ENCODE measurements at regions of chr3 and their contacts with region 1.

Region 1: GRCh38 chr3:44624749-44625480 is at the start of gene ZNF197:
- DNase-seq: peak; percentile 82 to 91
- ATAC-seq: peak; percentile 97 to 99 (median 98)
- H3K4me3 ChIP-seq: peak within 1 kb of the TSS; percentile 67 to 98 (median 88)
- H3K27ac ChIP-seq: peak within 1 kb of the TSS; percentile 84 to 98 (median 93)
- H3K4me1 ChIP-seq: peaks cover 0 to 41% (median 27%) of the 10 kb centered on the region in 9 donors
- H3K27me3 ChIP-seq: no peaks in the 10 kb centered on the region
- CTCF ChIP-seq: peak in 4 of 9 donors; percentile 27 to 47 (median 42)
- total RNA-seq, gene ZNF197: 11.2 to 14.8 (median 12.9) TPM

Region 2: GRCh38 chr3:44554626-44555592 is 70.0 kb before region 1 on chr3 and contains the start of gene ZKSCAN7:
- intact Hi-C with region 1: loop called in 1 of 10 experiments (anchors 2 kb)
- DNase-seq: peak; percentile 50 to 70
- ATAC-seq: peak; percentile 78 to 88 (median 86)
- H3K4me3 ChIP-seq: peak within 1 kb of the TSS; percentile 54 to 85 (median 74)
- H3K27ac ChIP-seq: peak within 1 kb of the TSS in 9 of 10 donors; percentile 43 to 83 (median 76)
- H3K4me1 ChIP-seq: peaks cover 4 to 16% (median 11%) of the 10 kb centered on the region in 9 donors
- H3K27me3 ChIP-seq: peaks cover 0 to 18% (median 14%) of the 10 kb centered on the region in 7 donors
- CTCF ChIP-seq: peak in 5 of 9 donors; percentile 15 to 42 (median 32)
- total RNA-seq, gene ZKSCAN7: 1.6 to 3.9 (median 2.4) TPM

Region 3: DNA sequence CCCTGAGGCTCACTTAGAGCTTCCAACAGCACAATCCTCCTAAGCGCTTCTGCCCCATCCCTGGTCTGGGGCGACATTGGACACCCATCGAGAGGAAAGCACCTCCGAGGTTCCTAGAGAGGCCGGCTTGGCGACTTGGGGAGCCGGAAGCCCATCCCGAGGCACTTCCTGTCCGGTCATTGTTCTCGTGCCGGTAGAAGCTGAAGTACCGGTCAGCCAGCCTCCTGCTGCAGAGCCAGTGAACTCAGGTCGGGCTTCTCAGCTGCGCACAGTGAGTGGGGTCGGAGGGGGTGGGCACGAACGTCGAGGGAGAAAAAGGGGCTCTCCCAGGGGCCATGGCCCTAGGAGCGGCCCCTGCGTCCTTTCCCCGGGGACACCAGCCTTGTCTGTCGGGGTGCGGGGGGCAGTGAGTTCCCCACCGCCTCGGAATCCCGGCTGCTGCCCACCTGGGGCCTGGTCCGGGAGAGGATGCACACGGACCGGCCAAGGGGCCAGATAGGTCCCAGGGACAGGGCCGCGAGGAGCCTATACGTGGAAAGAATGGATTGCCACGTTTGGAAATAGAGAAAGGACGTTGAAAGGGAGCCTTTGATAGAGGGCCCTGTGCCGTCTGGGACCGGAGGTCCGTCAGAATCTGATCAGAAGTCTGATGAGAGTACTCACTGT is 23.8 kb after region 1 on chr3 and contains the start of gene ZNF35:
- intact Hi-C with region 1: loop called in 1 of 10 experiments (anchors 2 kb)
- DNase-seq: peak; percentile 79 to 83
- ATAC-seq: peak; percentile 93 to 98 (median 97)
- H3K4me3 ChIP-seq: peak within 1 kb of the TSS; percentile 82 to 98 (median 95)
- H3K27ac ChIP-seq: peak within 1 kb of the TSS; percentile 45 to 89 (median 85)
- H3K4me1 ChIP-seq: peaks cover 0 to 18% (median 13%) of the 10 kb centered on the region in 9 donors
- H3K27me3 ChIP-seq: no peaks in the 10 kb centered on the region
- CTCF ChIP-seq: no peak
- total RNA-seq, gene ZNF35: 4.8 to 10.2 (median 6.4) TPM